Mammary epithelial cell (primary cell): ENCODE measurements at regions of chr18 and their contacts with region 1.

Region 1: DNA sequence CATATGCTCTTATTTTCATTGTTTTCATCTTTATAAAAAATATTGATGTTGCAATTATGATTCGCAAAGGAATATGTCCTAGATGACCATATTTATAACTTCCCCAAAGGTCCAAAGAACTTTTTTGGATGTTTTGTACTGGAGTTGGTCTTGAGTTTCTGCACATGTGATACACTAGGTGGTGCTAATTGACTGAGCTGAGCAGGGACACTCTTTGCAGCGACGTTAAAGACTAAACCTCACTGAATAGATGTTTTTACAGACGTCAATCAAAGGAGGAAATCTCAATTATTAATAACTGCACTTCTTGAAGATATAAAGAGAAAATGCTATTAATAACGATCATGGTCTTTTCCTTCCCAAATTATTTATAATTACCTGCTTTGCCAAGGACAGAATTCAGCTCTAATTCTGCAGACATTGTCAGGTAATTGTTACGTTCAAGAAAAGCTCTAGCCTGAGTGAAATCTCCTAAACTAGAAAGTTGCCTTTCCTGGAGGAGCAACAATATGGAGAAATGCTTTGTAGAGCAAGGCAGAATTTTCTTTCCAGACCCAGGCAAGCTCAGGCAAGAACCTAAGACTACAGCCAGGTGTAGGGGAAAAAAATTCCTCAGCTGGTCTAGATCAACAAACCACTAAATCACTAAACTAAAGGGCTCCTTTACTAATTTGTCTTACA is 119.3 kb upstream of the RBBP8 start:
- DNase-seq: peak; percentile 60
- H3K4me3 ChIP-seq: peak overlapping the region in 2 of 3 experiments; percentile 17 to 25
- H3K27ac ChIP-seq: peak overlapping the region; percentile 68
- H3K4me1 ChIP-seq: peaks cover 30% of the 10 kb centered on the region
- H3K27me3 ChIP-seq: no peaks in the 10 kb centered on the region
- CTCF ChIP-seq: peak; percentile 77 to 81

Region 2: DNA sequence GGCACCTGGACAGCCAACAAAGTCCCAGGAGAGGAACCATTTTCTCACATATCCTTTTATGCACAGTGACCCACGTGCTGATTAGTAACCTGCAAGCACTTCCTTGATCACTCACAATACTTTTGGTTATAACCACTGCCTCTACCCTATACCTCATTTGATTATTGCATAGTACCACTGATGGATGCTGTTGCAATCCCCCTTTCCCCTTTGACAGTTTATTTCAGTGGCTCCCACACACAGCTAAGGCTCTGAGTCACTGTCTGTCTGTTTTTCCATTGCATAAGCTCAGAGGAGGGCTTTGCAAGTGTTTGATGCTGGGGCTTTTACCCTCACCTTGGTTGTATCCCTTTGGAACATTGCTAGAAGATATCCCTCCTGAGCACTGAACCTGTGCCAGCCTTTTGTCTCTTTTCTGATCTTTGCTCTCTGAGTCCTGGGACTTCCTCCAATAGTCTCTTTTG is 17.7 kb after region 1 on chr18:
- CTCF ChIA-PET with region 1: interaction called, 8 read pairs
- dilution Hi-C with region 1: no loop called
- in situ Hi-C with region 1: no loop called
- intact Hi-C with region 1: loop called (anchors 1 kb)
- DNase-seq: peak; percentile 87
- H3K4me3 ChIP-seq: no peak overlapping the region
- H3K27ac ChIP-seq: peak overlapping the region; percentile 68
- H3K4me1 ChIP-seq: peaks cover 38% of the 10 kb centered on the region
- H3K27me3 ChIP-seq: no peaks in the 10 kb centered on the region
- CTCF ChIP-seq: no peak

Region 3: GRCh38 chr18:22933206-22933957 is 119.6 kb after region 1 on chr18 and contains the start of gene RBBP8:
- CTCF ChIA-PET with region 1: no interaction called
- dilution Hi-C with region 1: no loop called
- in situ Hi-C with region 1: no loop called
- intact Hi-C with region 1: loop called (anchors 1 kb)
- DNase-seq: peak; percentile 79
- H3K4me3 ChIP-seq: peak within 1 kb of the TSS; percentile 49 to 77 (median 66)
- H3K27ac ChIP-seq: peak within 1 kb of the TSS; percentile 95
- H3K4me1 ChIP-seq: peaks cover 36% of the 10 kb centered on the region
- H3K27me3 ChIP-seq: no peaks in the 10 kb centered on the region
- CTCF ChIP-seq: no peak
- total RNA-seq, gene RBBP8: 165 to 692 TPM

Region 4: GRCh38 chr18:22983175-22983574 is 169.4 kb after region 1 on chr18:
- CTCF ChIA-PET with region 1: interaction called, 5 read pairs
- dilution Hi-C with region 1: no loop called
- in situ Hi-C with region 1: loop called in 1 of 2 experiments (anchors 25 kb)
- intact Hi-C with region 1: loop called (anchors 1 kb)
- DNase-seq: no peak
- H3K4me3 ChIP-seq: no peak overlapping the region
- H3K27ac ChIP-seq: no peak overlapping the region
- H3K4me1 ChIP-seq: peaks cover 9% of the 10 kb centered on the region
- H3K27me3 ChIP-seq: no peaks in the 10 kb centered on the region
- CTCF ChIP-seq: peak; percentile 34 to 42

Region 5: GRCh38 chr18:23416298-23416697 is 602.5 kb after region 1 on chr18:
- CTCF ChIA-PET with region 1: no interaction called
- dilution Hi-C with region 1: no loop called
- in situ Hi-C with region 1: loop called in 1 of 2 experiments (anchors 25 kb)
- intact Hi-C with region 1: loop called (anchors 5 kb)
- DNase-seq: no peak
- H3K4me3 ChIP-seq: no peak overlapping the region
- H3K27ac ChIP-seq: no peak overlapping the region
- H3K4me1 ChIP-seq: no peaks in the 10 kb centered on the region
- H3K27me3 ChIP-seq: no peaks in the 10 kb centered on the region
- CTCF ChIP-seq: no peak

Region 6: GRCh38 chr18:23422672-23423418 is 609.1 kb after region 1 on chr18:
- CTCF ChIA-PET with region 1: no interaction called
- dilution Hi-C with region 1: no loop called
- in situ Hi-C with region 1: loop called in 1 of 2 experiments (anchors 25 kb)
- intact Hi-C with region 1: no loop called
- DNase-seq: peak; percentile 82
- H3K4me3 ChIP-seq: no peak overlapping the region
- H3K27ac ChIP-seq: no peak overlapping the region
- H3K4me1 ChIP-seq: peaks cover 12% of the 10 kb centered on the region
- H3K27me3 ChIP-seq: no peaks in the 10 kb centered on the region
- CTCF ChIP-seq: no peak